GM12878 (cell line): ENCODE measurements at regions of chr15 and their contacts with region 1.

Region 1: DNA sequence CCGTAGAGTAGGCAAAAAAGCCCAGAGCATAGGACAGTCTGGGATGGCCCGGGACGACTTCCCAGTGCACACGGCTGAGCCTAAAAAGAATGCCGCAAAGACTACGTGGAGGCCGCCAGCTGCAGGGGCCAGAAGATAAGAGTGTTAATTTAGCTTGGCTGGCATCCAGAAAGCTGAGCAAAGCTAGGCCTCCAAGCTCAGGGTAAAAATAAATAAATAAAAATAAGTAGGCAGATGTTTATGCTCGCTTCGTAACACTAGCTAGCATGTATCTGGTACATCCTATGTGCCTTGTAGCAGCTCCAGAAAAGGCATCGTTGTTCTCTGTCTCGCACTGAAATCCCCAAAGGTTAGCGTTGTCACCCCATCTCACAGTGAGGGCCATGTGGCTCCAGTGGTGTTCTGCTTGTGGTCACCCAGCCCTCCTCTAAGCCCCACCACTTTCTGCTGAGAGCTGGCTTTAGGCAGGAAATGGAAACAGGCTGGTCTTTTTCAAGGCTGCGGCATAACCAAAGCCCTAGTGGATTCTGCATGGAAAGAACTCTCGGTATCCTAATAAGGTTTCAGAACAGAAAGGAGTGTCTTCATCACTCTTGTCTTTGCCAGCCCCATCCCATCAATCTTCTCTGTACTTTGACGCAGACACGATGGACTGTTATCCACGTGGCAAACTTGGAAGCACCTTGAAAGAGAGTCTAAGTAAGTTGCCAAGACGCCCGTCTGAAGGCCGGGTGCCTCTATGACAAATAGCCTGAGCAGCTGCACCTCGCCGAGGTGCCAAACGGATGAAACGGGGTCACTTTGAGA is 58.1 kb upstream of the MEF2A start:
- DNase-seq: no peak
- ATAC-seq: peak; percentile 49
- H3K4me3 ChIP-seq: no peak overlapping the region; the same call in 1 of the 2 replicates
- H3K27ac ChIP-seq: peak overlapping the region; percentile 74
- H3K4me1 ChIP-seq: peaks cover 88% of the 10 kb centered on the region
- H3K27me3 ChIP-seq: no peaks in the 10 kb centered on the region
- CTCF ChIP-seq: no peak
- EP300 ChIP-seq: peak in 1 of 2 experiments; percentile 59; a peak in 2 of 4 replicates
- POLR2A ChIP-seq: peak; percentile 63
- RAD21 ChIP-seq: no peak

Region 2: DNA sequence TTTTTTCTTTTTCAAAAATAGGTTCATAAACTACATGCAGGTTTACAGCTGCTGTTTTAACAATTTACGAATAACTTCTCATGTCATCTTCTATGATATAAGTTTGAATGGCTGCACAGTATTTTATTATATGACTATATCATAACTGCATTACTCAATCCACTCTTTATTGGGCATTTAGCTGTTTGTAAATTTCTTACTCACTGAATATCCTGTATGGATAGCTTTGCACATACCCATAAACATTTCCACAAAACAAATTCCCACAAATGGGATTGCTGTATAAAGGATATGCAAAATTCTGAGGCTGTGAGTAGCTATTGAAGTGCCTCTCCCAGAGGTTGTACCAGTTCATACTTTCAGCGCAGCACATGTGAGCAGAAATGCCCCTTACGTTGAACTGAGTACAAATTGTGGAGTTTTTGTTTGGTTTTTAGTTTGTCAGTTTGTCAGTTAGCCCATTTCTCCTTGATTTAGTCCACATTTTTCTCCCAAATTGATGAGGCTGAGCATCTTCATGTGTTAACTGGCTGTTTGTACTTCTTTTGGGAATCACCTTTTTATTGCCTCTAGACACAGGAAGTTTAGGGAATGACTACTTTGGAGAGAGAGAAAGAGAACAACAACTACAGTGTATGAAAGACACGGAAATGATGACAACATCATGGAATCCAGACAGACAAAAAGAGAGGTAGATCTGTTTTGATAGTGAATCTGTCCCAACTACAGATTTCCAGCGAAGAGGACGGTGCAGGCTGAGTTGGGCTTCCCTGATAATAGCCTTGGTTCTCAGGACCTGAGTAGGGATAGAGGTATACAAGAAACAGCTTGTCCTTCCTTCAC is 283.1 kb before region 1 on chr15:
- CTCF ChIA-PET with region 1: no interaction called
- POLR2A ChIA-PET with region 1: no interaction called
- RAD21 ChIA-PET with region 1: no interaction called
- SMC1A ChIA-PET with region 1: no interaction called
- in situ Hi-C with region 1: no loop called
- intact Hi-C with region 1: no loop called
- DNase-seq: no peak
- ATAC-seq: no peak
- H3K4me3 ChIP-seq: no peak overlapping the region
- H3K27ac ChIP-seq: no peak overlapping the region
- H3K4me1 ChIP-seq: no peaks in the 10 kb centered on the region
- H3K27me3 ChIP-seq: no peaks in the 10 kb centered on the region
- CTCF ChIP-seq: no peak
- EP300 ChIP-seq: no peak
- POLR2A ChIP-seq: no peak
- RAD21 ChIP-seq: no peak

Region 3: GRCh38 chr15:99275525-99276128 is 232.1 kb before region 1 on chr15:
- CTCF ChIA-PET with region 1: interaction called, 6 read pairs
- POLR2A ChIA-PET with region 1: no interaction called
- RAD21 ChIA-PET with region 1: interaction called, 3 read pairs
- SMC1A ChIA-PET with region 1: interaction called, 6 read pairs
- in situ Hi-C with region 1: no loop called
- intact Hi-C with region 1: loop called (anchors 5 kb)
- DNase-seq: no peak
- ATAC-seq: peak; percentile 38
- H3K4me3 ChIP-seq: no peak overlapping the region
- H3K27ac ChIP-seq: no peak overlapping the region
- H3K4me1 ChIP-seq: no peaks in the 10 kb centered on the region
- H3K27me3 ChIP-seq: no peaks in the 10 kb centered on the region
- CTCF ChIP-seq: no peak
- EP300 ChIP-seq: no peak
- POLR2A ChIP-seq: no peak
- RAD21 ChIP-seq: no peak

Region 4: GRCh38 chr15:99315636-99316035 is 192.1 kb before region 1 on chr15:
- CTCF ChIA-PET with region 1: no interaction called
- POLR2A ChIA-PET with region 1: no interaction called
- RAD21 ChIA-PET with region 1: no interaction called
- SMC1A ChIA-PET with region 1: no interaction called
- in situ Hi-C with region 1: no loop called
- intact Hi-C with region 1: no loop called
- DNase-seq: no peak
- ATAC-seq: no peak
- H3K4me3 ChIP-seq: no peak overlapping the region
- H3K27ac ChIP-seq: no peak overlapping the region
- H3K4me1 ChIP-seq: no peaks in the 10 kb centered on the region
- H3K27me3 ChIP-seq: no peaks in the 10 kb centered on the region
- CTCF ChIP-seq: no peak
- EP300 ChIP-seq: no peak
- POLR2A ChIP-seq: no peak
- RAD21 ChIP-seq: no peak

Region 5: DNA sequence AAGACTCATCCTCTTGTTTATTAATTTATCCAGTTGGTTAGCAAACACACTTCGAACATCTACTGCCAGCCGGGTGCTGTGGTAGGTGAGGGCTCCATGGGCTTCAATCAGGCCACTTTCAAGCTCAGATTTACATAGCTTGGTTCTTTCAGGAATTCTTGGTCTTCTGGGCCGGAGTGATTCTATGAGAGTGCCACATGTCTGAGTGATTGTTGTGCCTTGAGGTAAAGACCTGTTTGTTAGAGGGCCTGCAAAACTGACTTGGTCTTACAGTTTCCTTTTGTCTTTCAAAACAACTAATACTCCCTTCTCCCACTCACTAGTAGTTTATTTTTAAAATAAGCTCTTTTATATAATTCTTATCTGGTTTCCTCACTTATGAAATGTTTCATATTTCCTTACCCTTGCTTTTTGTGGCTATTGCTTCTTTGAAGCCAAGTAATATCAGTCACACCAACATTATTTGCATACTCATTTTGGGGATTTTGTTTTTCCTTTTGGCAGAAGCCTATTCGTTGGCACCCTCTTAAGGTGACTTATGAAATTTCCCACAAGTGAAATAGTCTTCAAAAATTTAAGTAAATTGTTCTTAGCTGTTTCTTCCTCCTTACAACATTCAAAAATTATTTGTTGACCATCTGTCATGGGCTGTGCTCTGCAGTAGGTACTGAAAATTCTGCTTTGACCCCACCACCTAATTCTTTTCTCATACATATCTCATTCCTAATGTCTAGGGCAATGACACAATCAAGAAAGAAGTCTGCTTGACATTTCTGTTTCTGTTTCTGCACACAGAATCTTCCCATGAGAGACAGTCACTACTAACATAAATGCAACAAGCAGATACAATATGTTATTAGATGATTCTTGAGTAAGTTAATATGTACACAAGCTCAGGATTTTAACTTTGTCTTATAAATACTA is 136.3 kb before region 1 on chr15:
- CTCF ChIA-PET with region 1: interaction called, 6 read pairs
- POLR2A ChIA-PET with region 1: interaction called, 3 read pairs
- RAD21 ChIA-PET with region 1: interaction called, 10 read pairs
- SMC1A ChIA-PET with region 1: interaction called, 18 read pairs
- in situ Hi-C with region 1: no loop called
- intact Hi-C with region 1: loop called (anchors 5 kb)
- DNase-seq: peak; percentile 63
- ATAC-seq: peak; percentile 92
- H3K4me3 ChIP-seq: no peak overlapping the region
- H3K27ac ChIP-seq: peak overlapping the region; percentile 71
- H3K4me1 ChIP-seq: peaks cover 14% of the 10 kb centered on the region
- H3K27me3 ChIP-seq: no peaks in the 10 kb centered on the region
- CTCF ChIP-seq: peak; percentile 12 to 52 (median 25); a peak in 3 of 6 replicates
- EP300 ChIP-seq: no peak
- POLR2A ChIP-seq: no peak
- RAD21 ChIP-seq: peak; percentile 77

Region 6: GRCh38 chr15:99452774-99453636 is 54.7 kb before region 1 on chr15:
- CTCF ChIA-PET with region 1: no interaction called
- POLR2A ChIA-PET with region 1: interaction called, 6 read pairs
- RAD21 ChIA-PET with region 1: interaction called, 7 read pairs
- SMC1A ChIA-PET with region 1: interaction called, 3 read pairs
- in situ Hi-C with region 1: no loop called
- intact Hi-C with region 1: loop called (anchors 2 kb)
- DNase-seq: peak; percentile 60
- ATAC-seq: peak; percentile 95
- H3K4me3 ChIP-seq: peak overlapping the region; percentile 8; the same call in 1 of the 2 replicates
- H3K27ac ChIP-seq: 0 out of 2 replicates have a peak overlapping the region, but pooled peaks have one; percentile 41
- H3K4me1 ChIP-seq: peaks cover 18% of the 10 kb centered on the region
- H3K27me3 ChIP-seq: no peaks in the 10 kb centered on the region; a peak in 1 of 4 replicates
- CTCF ChIP-seq: no peak
- EP300 ChIP-seq: no peak
- POLR2A ChIP-seq: peak; percentile 58; the same call in 1 of the 2 replicates
- RAD21 ChIP-seq: no peak

Region 7: GRCh38 chr15:99565299-99566156 is 57.8 kb after region 1 on chr15 and contains the start of gene MEF2A:
- CTCF ChIA-PET with region 1: interaction called, 18 read pairs
- POLR2A ChIA-PET with region 1: interaction called, 41 read pairs
- RAD21 ChIA-PET with region 1: interaction called, 68 read pairs
- SMC1A ChIA-PET with region 1: interaction called, 46 read pairs
- in situ Hi-C with region 1: no loop called
- intact Hi-C with region 1: no loop called
- DNase-seq: peak; percentile 69
- ATAC-seq: peak; percentile 71
- H3K4me3 ChIP-seq: peak within 1 kb of the TSS; percentile 99
- H3K27ac ChIP-seq: peak within 1 kb of the TSS; percentile 97
- H3K4me1 ChIP-seq: peaks cover 10% of the 10 kb centered on the region
- H3K27me3 ChIP-seq: no peaks in the 10 kb centered on the region
- CTCF ChIP-seq: no peak
- EP300 ChIP-seq: peak in 1 of 2 experiments; percentile 68; a peak in 1 of 4 replicates
- POLR2A ChIP-seq: peak; percentile 91
- RAD21 ChIP-seq: peak; percentile 9; the same call in 1 of the 2 replicates
- polyA plus RNA-seq, gene MEF2A: 7.2 to 7.9 TPM

Region 8: GRCh38 chr15:100940767-100941379 is 1433.2 kb after region 1 on chr15:
- CTCF ChIA-PET with region 1: no interaction called
- POLR2A ChIA-PET with region 1: no interaction called
- RAD21 ChIA-PET with region 1: no interaction called
- SMC1A ChIA-PET with region 1: no interaction called
- in situ Hi-C with region 1: loop called (anchors 25 kb)
- intact Hi-C with region 1: no loop called
- DNase-seq: no peak
- ATAC-seq: peak; percentile 87
- H3K4me3 ChIP-seq: peak overlapping the region; percentile 31; the same call in 1 of the 2 replicates
- H3K27ac ChIP-seq: peak overlapping the region; percentile 85
- H3K4me1 ChIP-seq: peaks cover 38% of the 10 kb centered on the region
- H3K27me3 ChIP-seq: no peaks in the 10 kb centered on the region
- CTCF ChIP-seq: no peak
- EP300 ChIP-seq: peak; percentile 13 to 32; a peak in 1 of 4 replicates
- POLR2A ChIP-seq: peak; percentile 47
- RAD21 ChIP-seq: no peak